ENCODE measurements at regions of chr18 and their contacts with region 1.

Region 1: DNA sequence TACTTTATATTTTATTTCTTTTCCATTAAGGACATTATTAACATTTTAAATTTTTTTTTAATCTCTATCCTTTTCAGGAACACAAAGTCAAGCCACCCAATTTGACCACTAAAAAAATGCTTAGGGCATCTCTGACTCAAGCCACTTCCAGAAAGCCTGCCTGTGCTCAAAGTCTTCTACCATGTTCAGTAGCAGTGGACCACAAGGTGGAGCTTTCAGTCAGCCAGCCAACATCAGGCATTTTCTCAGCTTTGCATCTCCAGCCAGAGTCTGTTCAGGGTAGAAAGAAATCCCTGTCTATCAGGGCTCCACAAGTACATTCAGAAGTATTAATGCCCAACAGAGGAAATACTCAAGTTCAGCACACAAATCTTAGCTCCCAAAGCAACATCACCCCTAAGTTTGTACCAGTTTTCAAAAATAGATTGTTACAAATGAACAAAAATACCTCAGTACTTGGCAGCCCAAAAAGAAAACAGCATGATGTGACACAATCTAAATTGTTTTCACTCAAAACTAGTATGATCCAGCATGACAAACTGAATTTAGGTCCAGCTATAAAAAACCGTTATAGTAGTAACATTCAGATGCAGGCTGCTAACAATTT is 37.6 kb downstream of the C18orf63 start:
- DNase-seq: peak; percentile 53
- H3K4me3 ChIP-seq: no peak overlapping the region
- H3K27ac ChIP-seq: no peak overlapping the region
- H3K4me1 ChIP-seq: no peaks in the 10 kb centered on the region
- H3K27me3 ChIP-seq: peaks cover 1 to 15% of the 10 kb centered on the region in 2 experiments
- CTCF ChIP-seq: peak; percentile 40 to 62
- POLR2A ChIP-seq: no peak

Region 2: DNA sequence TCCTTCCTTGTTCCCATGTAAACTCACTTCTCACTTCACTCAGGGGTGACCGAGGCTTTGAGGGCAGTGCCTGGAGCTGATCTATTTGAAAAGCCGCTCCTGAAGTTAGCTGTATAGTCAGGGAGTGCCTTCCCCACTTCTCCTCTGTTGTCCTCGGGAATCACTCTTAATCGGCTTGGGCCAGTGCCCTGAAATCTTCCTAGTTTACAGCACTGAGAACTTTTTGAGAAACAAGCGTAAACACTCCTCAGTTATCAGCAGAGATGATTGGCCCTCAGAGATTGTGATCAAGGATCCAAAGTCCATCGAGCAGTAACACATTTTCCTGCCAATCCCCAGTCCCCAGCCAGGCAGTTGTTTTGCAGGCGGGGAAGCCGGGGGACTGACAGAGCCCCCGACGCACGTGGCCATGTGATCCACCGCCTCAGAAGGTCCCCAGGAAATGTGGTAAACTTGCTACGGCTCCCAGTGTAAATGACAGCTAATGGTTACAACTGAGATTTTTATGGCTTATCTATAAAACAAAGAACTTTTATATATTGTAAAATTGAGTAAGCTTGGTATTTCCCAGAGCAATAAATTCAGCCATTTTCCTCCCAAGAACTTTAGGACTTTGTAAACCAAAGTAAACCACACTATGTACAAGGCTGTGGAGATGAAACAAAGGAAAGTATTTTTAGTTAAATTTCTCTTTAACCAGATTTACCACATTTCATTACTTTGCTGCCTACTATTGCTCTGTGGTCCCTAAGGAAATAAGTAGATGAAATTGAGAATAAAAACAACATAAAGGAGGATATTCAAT is 15.8 kb after region 1 on chr18:
- CTCF ChIA-PET with region 1: interaction called, 10 read pairs
- POLR2A ChIA-PET with region 1: no interaction called
- dilution Hi-C with region 1: no loop called
- intact Hi-C with region 1: no loop called
- DNase-seq: no peak
- H3K4me3 ChIP-seq: no peak overlapping the region
- H3K27ac ChIP-seq: no peak overlapping the region
- H3K4me1 ChIP-seq: no peaks in the 10 kb centered on the region
- H3K27me3 ChIP-seq: no peaks in the 10 kb centered on the region
- CTCF ChIP-seq: no peak
- POLR2A ChIP-seq: no peak

Region 3: DNA sequence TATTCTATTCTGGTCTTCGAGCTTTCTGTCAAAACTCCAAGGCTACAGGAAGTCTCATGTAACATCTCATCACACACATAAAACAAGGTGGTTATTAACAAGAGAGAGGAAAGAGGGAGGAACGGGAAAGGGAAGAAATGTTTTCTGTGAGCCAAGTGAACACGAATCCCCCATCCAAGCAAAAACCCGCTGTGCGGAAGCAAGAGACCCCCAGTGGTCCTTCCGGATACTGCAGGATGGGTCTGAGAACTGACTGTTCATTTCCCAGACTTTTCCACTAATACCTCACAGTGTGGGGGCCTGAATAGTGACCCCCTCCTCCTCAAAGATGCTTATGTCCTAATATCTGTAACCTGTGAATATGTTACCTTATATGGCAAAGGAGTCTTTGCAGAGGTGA is 122.9 kb after region 1 on chr18:
- CTCF ChIA-PET with region 1: no interaction called
- POLR2A ChIA-PET with region 1: no interaction called
- dilution Hi-C with region 1: no loop called
- intact Hi-C with region 1: loop called (anchors 1 kb)
- DNase-seq: peak; percentile 6
- H3K4me3 ChIP-seq: no peak overlapping the region
- H3K27ac ChIP-seq: no peak overlapping the region
- H3K4me1 ChIP-seq: no peaks in the 10 kb centered on the region
- H3K27me3 ChIP-seq: peaks cover 0 to 11% of the 10 kb centered on the region in 2 experiments
- CTCF ChIP-seq: peak; percentile 38 to 63
- POLR2A ChIP-seq: no peak

Region 4: GRCh38 chr18:74506425-74507119 is 153.3 kb after region 1 on chr18:
- CTCF ChIA-PET with region 1: no interaction called
- POLR2A ChIA-PET with region 1: no interaction called
- dilution Hi-C with region 1: no loop called
- intact Hi-C with region 1: no loop called
- DNase-seq: no peak
- H3K4me3 ChIP-seq: no peak overlapping the region
- H3K27ac ChIP-seq: no peak overlapping the region
- H3K4me1 ChIP-seq: no peaks in the 10 kb centered on the region
- H3K27me3 ChIP-seq: no peaks in the 10 kb centered on the region
- CTCF ChIP-seq: no peak
- POLR2A ChIP-seq: no peak

Region 5: GRCh38 chr18:76349067-76349715 is 1995.9 kb after region 1 on chr18:
- CTCF ChIA-PET with region 1: interaction called, 12 read pairs
- POLR2A ChIA-PET with region 1: no interaction called
- dilution Hi-C with region 1: no loop called
- intact Hi-C with region 1: loop called (anchors 1 kb)
- DNase-seq: peak; percentile 59
- H3K4me3 ChIP-seq: no peak overlapping the region
- H3K27ac ChIP-seq: no peak overlapping the region
- H3K4me1 ChIP-seq: no peaks in the 10 kb centered on the region
- H3K27me3 ChIP-seq: no peaks in the 10 kb centered on the region
- CTCF ChIP-seq: peak; percentile 79 to 83
- POLR2A ChIP-seq: no peak

Measured in endothelial cell of umbilical vein (primary cell).